Activated CD4-positive, alpha-beta T cell treated with anti-CD3 and anti-CD28 coated beads, Interleukin-2, amount 10 ng/mL, durations not matched to agents 24 days and 14 days (primary cell): ENCODE measurements at regions of chr1 and their contacts with region 1.

Region 1: GRCh38 chr1:15246960-15247614 is at the start of gene FHAD1:
- DNase-seq: peak; percentile 83
- H3K4me3 Mint-ChIP-seq: peak within 1 kb of the TSS; percentile 69
- H3K27ac Mint-ChIP-seq: peak within 1 kb of the TSS; percentile 83
- H3K4me1 Mint-ChIP-seq: peaks cover 46% of the 10 kb centered on the region
- H3K27me3 Mint-ChIP-seq: peaks cover 68% of the 10 kb centered on the region
- total RNA-seq, gene FHAD1: not detected in 2 replicates

Region 2: DNA sequence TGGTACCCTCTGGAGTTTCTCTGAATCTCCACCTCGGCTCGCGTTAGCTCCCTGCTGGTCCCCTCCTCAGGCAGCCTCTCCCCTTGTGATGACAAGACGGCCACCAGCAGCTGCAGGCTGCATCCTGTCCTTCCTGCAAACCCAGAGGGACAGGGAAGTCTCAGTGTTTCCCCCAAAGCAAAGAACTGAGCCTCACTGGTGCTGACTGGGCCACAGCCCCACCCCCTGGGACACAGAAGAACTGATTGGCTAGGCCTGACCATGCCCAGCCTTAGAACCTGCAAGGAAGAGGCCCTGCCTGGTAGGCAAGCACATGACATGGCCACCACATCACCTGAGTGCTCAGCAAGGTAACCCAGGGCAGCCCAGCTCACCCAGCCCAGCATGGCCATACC is 59.0 kb before region 1 on chr1:
- intact Hi-C with region 1: no loop called
- DNase-seq: no peak
- H3K4me3 Mint-ChIP-seq: no peak overlapping the region
- H3K27ac Mint-ChIP-seq: no peak overlapping the region
- H3K4me1 Mint-ChIP-seq: no peaks in the 10 kb centered on the region
- H3K27me3 Mint-ChIP-seq: peaks cover 20% of the 10 kb centered on the region

Region 3: GRCh38 chr1:15231714-15232201 is 15.3 kb before region 1 on chr1:
- intact Hi-C with region 1: loop called (anchors 1 kb)
- DNase-seq: peak; percentile 79
- H3K4me3 Mint-ChIP-seq: no peak overlapping the region
- H3K27ac Mint-ChIP-seq: peak overlapping the region; percentile 42
- H3K4me1 Mint-ChIP-seq: peaks cover 17% of the 10 kb centered on the region
- H3K27me3 Mint-ChIP-seq: peaks cover 34% of the 10 kb centered on the region

Region 4: GRCh38 chr1:15296602-15297321 is 49.7 kb after region 1 on chr1:
- intact Hi-C with region 1: loop called (anchors 2 kb)
- DNase-seq: no peak
- H3K4me3 Mint-ChIP-seq: no peak overlapping the region
- H3K27ac Mint-ChIP-seq: no peak overlapping the region
- H3K4me1 Mint-ChIP-seq: peaks cover 9% of the 10 kb centered on the region
- H3K27me3 Mint-ChIP-seq: peaks cover 5% of the 10 kb centered on the region